ENCODE measurements at regions of chrX and their contacts with region 1.

Region 1: DNA sequence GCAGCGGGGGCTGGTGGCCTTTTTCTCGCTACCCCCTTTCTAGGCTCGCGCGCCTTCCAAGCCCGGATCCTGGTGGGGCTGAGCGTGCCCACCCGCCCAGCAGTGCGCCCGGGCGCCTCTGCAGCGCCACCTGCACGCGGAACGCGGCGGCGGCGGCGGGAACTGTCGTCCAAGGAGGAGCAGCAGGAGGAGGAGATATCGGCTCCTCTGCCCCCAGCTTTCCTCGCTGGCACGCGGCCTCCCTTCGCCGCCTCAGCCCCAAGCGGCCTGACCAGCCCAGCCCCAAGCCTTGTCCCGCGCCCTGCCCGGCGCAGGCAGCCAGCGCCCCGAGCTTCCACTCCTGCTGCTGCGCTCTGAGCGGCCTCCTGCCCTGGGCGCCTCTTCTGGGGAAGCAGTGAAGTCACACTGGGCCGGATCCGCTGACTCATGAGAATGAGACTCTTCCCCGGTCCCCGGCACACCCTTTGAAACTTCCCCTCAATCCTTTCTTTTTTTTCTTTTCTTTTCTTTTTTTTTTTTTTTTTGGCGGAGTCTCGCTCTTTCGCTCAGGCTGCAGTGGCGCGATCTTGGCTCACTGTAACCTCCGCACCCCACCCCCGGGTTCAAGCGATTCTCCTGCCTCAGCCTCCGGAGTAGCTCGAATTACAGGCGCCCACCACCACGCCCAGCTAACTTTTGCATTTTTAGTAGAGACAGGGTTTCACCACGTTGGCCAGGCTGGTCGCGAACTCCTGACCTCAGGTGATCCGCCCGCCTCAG is 10.6 kb upstream of the ELF4 start:
- DNase-seq: peak; percentile 64 to 76 (median 71)
- H3K4me3 ChIP-seq: peak overlapping the region in 1 of 2 donors; percentile 38
- H3K4me3 Mint-ChIP-seq: peak overlapping the region; percentile 55 to 80 (median 74)
- H3K27ac ChIP-seq: peak overlapping the region; percentile 21
- H3K27ac Mint-ChIP-seq: peak overlapping the region in 5 of 7 donors; percentile 41 to 63 (median 56)
- H3K4me1 ChIP-seq: peaks cover 21% of the 10 kb centered on the region
- H3K4me1 Mint-ChIP-seq: peaks cover 8 to 27% (median 19%) of the 10 kb centered on the region in 4 donors
- H3K27me3 ChIP-seq: no peaks in the 10 kb centered on the region
- H3K27me3 Mint-ChIP-seq: no peaks in the 10 kb centered on the region

Region 2: DNA sequence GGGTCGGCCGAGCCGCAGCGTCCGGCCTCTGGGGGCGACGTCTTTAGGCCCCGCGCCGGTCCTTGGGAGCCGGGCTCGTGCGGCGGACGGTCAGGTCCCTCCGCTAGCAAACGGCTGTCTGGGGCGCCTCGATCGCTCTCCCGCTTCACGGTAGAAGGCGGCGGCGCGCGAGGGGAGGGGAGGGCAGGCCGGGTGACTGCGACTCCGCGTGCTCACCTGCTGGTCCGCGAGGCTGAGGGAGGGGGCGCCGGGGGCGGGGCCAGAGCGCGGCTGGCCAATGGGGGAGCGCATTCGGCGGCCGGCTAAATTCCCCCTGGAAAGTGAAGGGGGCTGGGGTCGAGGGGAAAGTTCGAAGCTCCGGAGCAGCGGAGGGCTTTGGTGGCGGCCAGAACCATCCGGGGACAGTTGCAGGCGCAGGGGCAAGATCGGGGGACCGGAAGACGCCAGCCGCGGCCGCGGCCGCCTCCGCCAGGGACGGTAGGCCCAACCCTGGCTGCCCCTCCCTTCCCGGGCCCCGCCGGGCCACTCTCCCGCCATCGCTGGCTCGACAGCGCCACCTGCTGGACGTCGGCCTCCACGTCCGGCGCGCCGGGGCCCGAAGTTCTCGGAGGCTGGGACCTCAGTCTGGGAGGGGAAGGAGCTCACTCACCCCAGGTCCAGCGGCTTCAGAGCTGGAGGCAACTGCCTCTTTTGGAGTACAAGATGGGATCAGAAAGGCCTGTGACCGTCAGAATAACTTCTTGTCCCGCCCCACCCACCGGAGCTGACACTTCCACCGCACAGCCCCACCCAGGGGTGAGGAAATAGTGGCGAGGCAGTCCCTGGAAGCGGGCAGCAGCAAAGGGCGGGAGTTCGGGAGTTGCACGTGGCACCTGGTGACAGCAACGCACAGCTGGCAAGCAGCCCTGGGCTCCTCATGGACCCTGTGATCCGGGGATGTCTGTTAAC is 60.5 kb before region 1 on chrX:
- CTCF ChIA-PET with region 1: interaction called, 11 read pairs
- POLR2A ChIA-PET with region 1: no interaction called
- intact Hi-C with region 1: no loop called
- DNase-seq: peak; percentile 71 to 79 (median 72)
- H3K4me3 ChIP-seq: peak overlapping the region in 1 of 2 donors; percentile 28
- H3K4me3 Mint-ChIP-seq: peak overlapping the region; percentile 65 to 82 (median 75)
- H3K27ac ChIP-seq: peak overlapping the region; percentile 39
- H3K27ac Mint-ChIP-seq: peak overlapping the region in 5 of 7 donors; percentile 27 to 70 (median 55)
- H3K4me1 ChIP-seq: peaks cover 7% of the 10 kb centered on the region
- H3K4me1 Mint-ChIP-seq: peaks cover 3 to 17% (median 11%) of the 10 kb centered on the region in 4 donors
- H3K27me3 ChIP-seq: no peaks in the 10 kb centered on the region
- H3K27me3 Mint-ChIP-seq: no peaks in the 10 kb centered on the region

Region 3: GRCh38 chrX:130091958-130092522 is 28.9 kb before region 1 on chrX:
- CTCF ChIA-PET with region 1: interaction called, 118 read pairs
- POLR2A ChIA-PET with region 1: interaction called, 9 read pairs
- intact Hi-C with region 1: loop called (anchors 1 kb)
- DNase-seq: peak; percentile 85 to 96 (median 91)
- H3K4me3 ChIP-seq: peak overlapping the region in 1 of 2 donors; percentile 49
- H3K4me3 Mint-ChIP-seq: peak overlapping the region; percentile 87 to 96 (median 90)
- H3K27ac ChIP-seq: peak overlapping the region; percentile 69
- H3K27ac Mint-ChIP-seq: peak overlapping the region; percentile 93 to 99 (median 96)
- H3K4me1 ChIP-seq: peaks cover 79% of the 10 kb centered on the region
- H3K4me1 Mint-ChIP-seq: peaks cover 33 to 82% (median 60%) of the 10 kb centered on the region in 4 donors
- H3K27me3 ChIP-seq: no peaks in the 10 kb centered on the region
- H3K27me3 Mint-ChIP-seq: no peaks in the 10 kb centered on the region

Region 4: GRCh38 chrX:130097507-130098209 is 23.3 kb before region 1 on chrX:
- CTCF ChIA-PET with region 1: interaction called, 118 read pairs
- POLR2A ChIA-PET with region 1: interaction called, 8 read pairs
- intact Hi-C with region 1: loop called (anchors 1 kb)
- DNase-seq: peak; percentile 45 to 75 (median 47)
- H3K4me3 ChIP-seq: no peak overlapping the region
- H3K4me3 Mint-ChIP-seq: peak overlapping the region in 7 of 8 donors; percentile 59 to 77 (median 73)
- H3K27ac ChIP-seq: peak overlapping the region; percentile 40
- H3K27ac Mint-ChIP-seq: peak overlapping the region; percentile 83 to 94 (median 91)
- H3K4me1 ChIP-seq: peaks cover 92% of the 10 kb centered on the region
- H3K4me1 Mint-ChIP-seq: peaks cover 39 to 80% (median 60%) of the 10 kb centered on the region in 4 donors
- H3K27me3 ChIP-seq: no peaks in the 10 kb centered on the region
- H3K27me3 Mint-ChIP-seq: no peaks in the 10 kb centered on the region

Region 5: DNA sequence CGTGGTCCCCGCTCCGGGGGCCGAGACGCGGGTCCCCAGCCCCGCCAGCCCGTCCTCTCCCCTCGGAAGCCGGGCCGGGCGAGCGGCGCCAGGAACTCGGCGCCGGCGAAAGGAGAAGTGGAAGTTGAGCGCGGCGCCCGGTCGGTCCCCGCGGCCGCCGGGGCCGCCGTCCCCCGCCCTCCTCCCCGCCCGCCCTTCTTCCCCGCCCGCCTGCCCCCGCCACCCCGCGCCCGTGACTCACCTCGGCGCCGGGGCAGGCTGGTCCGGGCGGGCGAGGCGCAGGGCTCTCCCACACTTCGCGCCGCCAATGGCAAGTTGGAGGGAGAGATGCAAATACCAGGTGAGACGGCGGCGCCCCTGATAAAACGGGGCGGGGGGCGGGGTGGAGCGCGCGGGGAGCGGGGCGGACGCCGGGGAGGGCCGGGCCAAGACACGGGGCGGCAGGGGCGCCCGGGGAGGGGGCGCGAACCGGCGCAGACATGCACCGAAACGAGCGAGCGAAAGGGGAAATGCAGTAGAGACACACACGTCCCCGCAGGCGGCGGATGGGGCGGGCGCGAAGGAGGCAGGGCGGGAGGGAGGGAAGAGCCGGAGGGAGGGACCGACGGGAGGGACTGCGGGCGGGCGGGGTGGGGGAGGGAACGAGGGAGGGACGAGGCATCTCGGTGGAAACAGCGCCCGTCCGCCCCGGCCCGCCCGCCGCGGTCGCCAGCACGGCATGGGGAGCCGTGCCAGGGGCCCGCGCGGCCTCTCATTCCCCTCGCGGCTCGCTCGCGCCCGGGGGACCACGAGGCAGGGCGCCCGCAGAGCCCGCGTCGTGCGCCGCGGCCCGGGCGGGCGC is 10.3 kb before region 1 on chrX and contains the start of gene ELF4:
- CTCF ChIA-PET with region 1: interaction called, 27 read pairs
- POLR2A ChIA-PET with region 1: interaction called, 13 read pairs
- intact Hi-C with region 1: no loop called
- DNase-seq: peak; percentile 43 to 79 (median 48)
- H3K4me3 ChIP-seq: peak within 1 kb of the TSS; percentile 57 to 76
- H3K4me3 Mint-ChIP-seq: peak within 1 kb of the TSS; percentile 89 to 94 (median 92)
- H3K27ac ChIP-seq: peak within 1 kb of the TSS; percentile 70
- H3K27ac Mint-ChIP-seq: peak within 1 kb of the TSS; percentile 75 to 93 (median 91)
- H3K4me1 ChIP-seq: peaks cover 31% of the 10 kb centered on the region
- H3K4me1 Mint-ChIP-seq: peaks cover 14 to 43% (median 28%) of the 10 kb centered on the region in 4 donors
- H3K27me3 ChIP-seq: no peaks in the 10 kb centered on the region
- H3K27me3 Mint-ChIP-seq: no peaks in the 10 kb centered on the region
- total RNA-seq, gene ELF4: 29.8 to 31.3 TPM

Region 6: GRCh38 chrX:130186651-130187050 is 65.7 kb after region 1 on chrX:
- CTCF ChIA-PET with region 1: interaction called, 40 read pairs
- POLR2A ChIA-PET with region 1: no interaction called
- intact Hi-C with region 1: no loop called
- DNase-seq: no peak
- H3K4me3 ChIP-seq: no peak overlapping the region
- H3K4me3 Mint-ChIP-seq: no peak overlapping the region
- H3K27ac ChIP-seq: no peak overlapping the region
- H3K27ac Mint-ChIP-seq: peak overlapping the region in 3 of 7 donors; percentile 10 to 84 (median 60)
- H3K4me1 ChIP-seq: peaks cover 15% of the 10 kb centered on the region
- H3K4me1 Mint-ChIP-seq: peaks cover 5 to 15% (median 8%) of the 10 kb centered on the region in 4 donors
- H3K27me3 ChIP-seq: no peaks in the 10 kb centered on the region
- H3K27me3 Mint-ChIP-seq: no peaks in the 10 kb centered on the region

Region 7: DNA sequence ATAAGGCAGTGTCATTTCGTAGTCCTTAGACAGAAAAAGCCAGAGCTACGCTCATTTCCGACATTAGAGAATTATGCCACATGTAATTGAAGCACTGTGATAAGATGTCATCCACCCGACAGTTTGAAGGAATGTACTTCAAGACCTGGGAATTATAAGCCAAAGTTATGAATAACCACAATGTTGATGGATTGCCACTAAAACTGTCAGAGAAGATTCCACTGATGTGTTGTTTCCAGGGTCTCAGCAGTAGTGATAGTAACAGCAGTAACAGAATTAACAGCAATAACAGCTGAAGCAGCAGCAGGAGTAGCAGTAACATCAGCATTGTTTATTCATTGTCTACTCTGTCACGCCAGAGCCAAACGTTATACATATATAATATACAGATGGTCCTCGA is 75.5 kb after region 1 on chrX:
- CTCF ChIA-PET with region 1: interaction called, 40 read pairs
- POLR2A ChIA-PET with region 1: no interaction called
- intact Hi-C with region 1: loop called (anchors 1 kb)
- DNase-seq: no peak
- H3K4me3 ChIP-seq: no peak overlapping the region
- H3K4me3 Mint-ChIP-seq: no peak overlapping the region
- H3K27ac ChIP-seq: no peak overlapping the region
- H3K27ac Mint-ChIP-seq: no peak overlapping the region
- H3K4me1 ChIP-seq: peaks cover 5% of the 10 kb centered on the region
- H3K4me1 Mint-ChIP-seq: peaks cover 0 to 5% (median 2%) of the 10 kb centered on the region in 4 donors
- H3K27me3 ChIP-seq: no peaks in the 10 kb centered on the region
- H3K27me3 Mint-ChIP-seq: peaks cover 0 to 2% of the 10 kb centered on the region in 2 donors